HEK293 (cell line): ENCODE measurements at regions of chr7 and their contacts with region 1.

Region 1: GRCh38 chr7:37833107-37833817 is 15.1 kb upstream of the NME8 start:
- H3K4me3 ChIP-seq: peak overlapping the region; percentile 1; the same call in 1 of the 2 replicates
- H3K27ac ChIP-seq: no peak overlapping the region
- H3K4me1 ChIP-seq: no peaks in the 10 kb centered on the region
- CTCF ChIP-seq: no peak

Region 2: DNA sequence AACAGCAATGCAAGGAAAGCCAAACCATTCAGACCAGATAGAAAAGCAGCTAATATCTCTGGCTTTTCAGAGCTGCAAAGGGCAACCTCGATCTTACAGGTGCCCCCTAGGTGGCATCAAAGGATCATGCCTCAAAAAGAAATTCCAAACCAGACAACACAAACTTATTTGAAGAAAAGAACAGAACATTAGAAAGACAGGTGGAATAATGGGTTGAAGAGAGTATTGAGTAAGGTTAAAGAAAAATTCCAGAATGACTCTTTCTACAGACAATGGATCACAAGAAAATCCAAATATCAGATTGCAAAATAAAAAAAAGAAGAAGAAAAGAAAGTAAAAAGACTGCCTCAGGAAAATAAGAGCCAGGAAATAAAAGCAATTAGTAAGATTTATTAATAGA is 598.3 kb before region 1 on chr7:
- CTCF ChIA-PET with region 1: interaction called, 17 read pairs
- POLR2A ChIA-PET with region 1: no interaction called
- H3K4me3 ChIP-seq: no peak overlapping the region
- H3K27ac ChIP-seq: no peak overlapping the region
- H3K4me1 ChIP-seq: no peaks in the 10 kb centered on the region
- CTCF ChIP-seq: no peak

Region 3: DNA sequence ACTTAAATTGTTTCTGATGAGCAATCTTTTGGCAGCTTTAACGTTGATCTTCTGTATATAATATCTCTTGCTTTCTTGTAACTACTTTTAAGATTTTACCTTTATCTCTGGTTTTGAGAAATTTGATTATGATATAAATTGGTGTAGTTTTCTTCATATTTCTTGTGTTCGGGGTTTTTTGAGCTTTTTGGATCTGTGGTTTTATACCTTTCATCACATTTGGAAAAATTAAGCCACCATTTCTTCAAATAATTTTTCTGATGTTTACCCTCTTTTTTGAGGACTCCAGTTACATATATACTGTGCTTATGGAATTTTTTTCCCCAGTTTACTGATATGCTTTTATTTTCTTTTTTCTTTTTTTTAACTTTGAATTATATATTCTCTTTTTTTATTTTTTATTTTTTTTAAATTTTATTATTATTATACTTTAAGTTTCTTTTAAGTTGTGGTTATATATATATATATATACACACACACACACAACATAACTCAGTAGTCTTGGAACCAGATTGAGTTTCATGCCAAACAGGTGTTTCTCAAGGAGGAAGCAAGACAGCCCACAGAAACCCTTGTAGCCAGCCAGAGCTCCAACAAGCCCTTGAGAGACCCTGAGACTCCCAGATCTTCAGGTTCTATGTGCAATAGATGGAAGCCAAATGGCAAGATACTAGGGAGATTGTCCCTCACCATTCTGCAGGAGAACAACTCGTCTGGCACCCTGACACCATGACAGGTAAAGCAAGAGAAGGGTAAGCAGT is 12.4 kb before region 1 on chr7:
- CTCF ChIA-PET with region 1: interaction called, 15 read pairs
- POLR2A ChIA-PET with region 1: no interaction called
- H3K4me3 ChIP-seq: no peak overlapping the region
- H3K27ac ChIP-seq: no peak overlapping the region
- H3K4me1 ChIP-seq: no peaks in the 10 kb centered on the region
- CTCF ChIP-seq: no peak

Region 4: DNA sequence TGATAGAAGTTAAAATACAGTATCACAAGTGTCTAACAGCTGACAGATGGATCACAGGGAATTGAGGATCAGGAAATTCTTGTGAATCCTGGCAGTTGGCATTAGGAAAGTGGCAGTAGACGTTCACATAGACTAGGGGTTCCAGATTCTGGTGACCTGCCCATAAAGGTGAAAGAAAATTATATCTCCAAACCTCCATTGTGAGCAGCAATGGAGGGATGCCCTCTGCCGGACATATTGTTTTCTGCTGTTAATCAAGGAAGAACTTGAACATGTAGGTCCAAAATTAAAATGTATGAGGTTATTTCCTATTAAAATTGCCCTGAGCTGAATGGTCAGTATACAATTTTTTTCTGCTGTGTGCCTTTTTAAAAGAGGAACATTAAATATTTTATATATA is 20.2 kb after region 1 on chr7:
- CTCF ChIA-PET with region 1: interaction called, 13 read pairs
- POLR2A ChIA-PET with region 1: no interaction called
- H3K4me3 ChIP-seq: no peak overlapping the region
- H3K27ac ChIP-seq: no peak overlapping the region
- H3K4me1 ChIP-seq: no peaks in the 10 kb centered on the region
- CTCF ChIP-seq: no peak